Right ventricle myocardium inferior (tissue), 1 donor: ENCODE measurements at regions of chr12 and their contacts with region 1.

Region 1: GRCh38 chr12:123062681-123063486 is 82.4 kb downstream of the ARL6IP4 start:
- DNase-seq: peak; percentile 53
- ATAC-seq: peak; percentile 56

Region 2: GRCh38 chr12:123050331-123050831 is 12.5 kb before region 1 on chr12:
- intact Hi-C with region 1: loop called (anchors 2 kb)
- DNase-seq: peak; percentile 70
- ATAC-seq: peak; percentile 96

Region 3: GRCh38 chr12:123094349-123095074 is 31.6 kb after region 1 on chr12:
- intact Hi-C with region 1: loop called (anchors 5 kb)
- DNase-seq: no peak
- ATAC-seq: peak; percentile 20